ENCODE measurements at regions of chr20 and their contacts with region 1.

Region 1: DNA sequence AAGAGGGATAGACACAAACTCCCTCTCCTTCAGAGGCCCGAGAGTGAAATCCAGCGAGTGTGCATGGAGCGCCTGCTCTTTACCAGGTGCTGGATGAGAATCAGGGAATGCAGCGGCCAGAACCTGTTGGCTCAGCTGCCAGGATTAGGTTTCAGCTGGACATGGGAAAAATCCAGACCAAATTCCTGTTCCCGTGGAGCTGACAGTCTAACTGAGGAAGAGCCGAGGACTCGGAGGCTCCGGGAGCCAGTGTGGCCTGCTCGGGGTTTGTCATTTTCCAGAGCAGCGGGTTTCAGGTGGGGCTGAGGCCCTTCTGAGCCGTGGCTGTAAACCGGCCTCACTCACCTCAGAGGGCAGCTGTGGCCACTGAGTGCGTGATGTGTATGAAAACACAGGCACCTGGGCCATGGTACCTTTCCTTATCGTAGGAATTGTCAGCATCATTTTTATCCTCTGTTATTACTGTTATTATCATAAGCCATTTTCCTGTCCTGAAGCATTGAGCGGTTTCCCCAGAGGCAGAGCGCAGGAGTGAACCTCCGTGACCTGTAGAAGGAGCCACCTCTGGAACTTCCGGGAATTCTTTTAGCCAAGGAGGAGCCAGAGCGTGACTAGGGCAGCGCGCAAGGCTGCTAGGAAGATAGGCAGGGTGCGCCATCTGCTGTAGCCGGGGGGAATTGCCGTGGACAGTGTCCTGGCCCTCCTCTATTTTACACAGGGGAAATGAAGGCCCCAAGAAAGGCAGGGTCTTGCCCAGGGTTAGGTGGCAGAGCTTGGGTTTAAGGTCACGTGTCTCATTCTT is 27.3 kb downstream of the PKIG start:
- DNase-seq: peak; percentile 93
- ATAC-seq: peak; percentile 91

Region 2: DNA sequence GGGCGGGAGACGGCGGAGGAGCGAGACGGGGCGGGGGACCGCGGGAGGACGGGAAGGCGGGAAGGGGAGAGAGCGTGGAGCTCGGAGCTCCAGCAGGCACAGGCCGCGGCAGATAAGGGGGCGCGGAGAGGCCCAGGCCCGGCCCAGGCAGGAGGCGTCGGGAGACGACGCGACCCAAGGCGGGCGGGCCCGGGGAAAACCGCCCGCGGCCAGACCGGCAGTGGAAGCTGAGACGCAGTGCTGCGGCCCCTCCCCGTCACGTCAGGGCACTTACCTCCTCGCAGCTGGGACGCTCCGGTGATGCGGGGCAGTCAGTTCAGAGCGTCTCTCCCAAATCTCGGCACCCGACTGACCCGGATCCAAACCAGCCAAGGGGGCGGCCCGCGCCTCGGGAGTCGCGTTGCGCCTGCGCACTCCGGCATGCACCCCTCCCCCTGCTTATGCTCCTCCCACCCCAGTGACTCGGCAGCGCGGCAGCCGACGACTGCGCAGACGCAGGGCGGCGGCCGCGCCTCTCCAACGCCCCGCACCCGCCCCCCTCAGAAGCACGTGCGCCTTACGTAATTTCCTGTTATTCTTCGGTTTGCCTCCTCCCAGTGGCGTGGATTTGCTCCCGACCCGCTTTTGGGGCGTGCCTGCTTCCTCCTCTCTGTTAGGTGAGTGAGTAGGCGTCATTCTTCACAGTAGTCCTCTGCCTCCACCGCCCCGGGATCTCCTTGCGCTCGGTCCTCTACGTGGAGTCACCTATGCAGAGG is 399.1 kb before region 1 on chr20 and contains the start of gene OSER1:
- intact Hi-C with region 1: loop called (anchors 10 kb)
- DNase-seq: peak; percentile 97
- ATAC-seq: peak; percentile 96
- total RNA-seq, gene OSER1: 32.8 TPM

Region 3: DNA sequence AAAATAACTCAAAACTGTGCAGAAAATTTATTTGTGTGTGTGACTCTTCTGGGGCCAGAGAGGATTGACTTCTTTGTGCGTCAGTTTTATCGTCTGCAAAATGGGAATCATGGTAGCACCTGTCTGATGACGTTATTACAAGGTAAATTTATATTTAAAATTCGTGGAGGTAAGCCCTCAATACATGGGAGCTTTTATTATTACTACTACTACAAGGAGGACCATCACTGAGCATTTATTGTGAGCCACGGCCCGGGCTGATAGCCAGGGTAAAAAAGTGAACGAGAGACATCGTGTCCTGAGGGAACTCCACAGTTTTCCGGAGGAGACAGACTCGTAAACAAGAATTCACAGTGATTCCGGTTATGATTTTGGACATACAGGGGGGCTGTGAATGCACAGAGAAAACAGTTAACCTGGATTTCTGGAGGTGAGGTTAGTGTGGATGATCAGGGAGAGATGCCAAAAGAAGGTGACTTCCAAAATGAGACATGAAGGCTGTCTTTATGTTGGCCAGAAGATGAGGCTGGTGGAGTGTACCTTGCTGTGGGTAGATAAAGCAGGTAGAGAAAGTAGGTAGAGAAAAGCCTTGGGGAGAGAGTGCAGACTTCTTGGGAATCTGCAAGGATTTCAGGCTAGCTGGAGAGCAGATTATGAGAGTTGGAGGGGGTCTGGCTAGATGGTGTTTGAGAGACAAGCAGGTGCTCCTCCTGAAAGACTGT is 77.3 kb before region 1 on chr20:
- intact Hi-C with region 1: loop called (anchors 5 kb)
- DNase-seq: peak; percentile 55
- ATAC-seq: peak; percentile 54

Region 4: DNA sequence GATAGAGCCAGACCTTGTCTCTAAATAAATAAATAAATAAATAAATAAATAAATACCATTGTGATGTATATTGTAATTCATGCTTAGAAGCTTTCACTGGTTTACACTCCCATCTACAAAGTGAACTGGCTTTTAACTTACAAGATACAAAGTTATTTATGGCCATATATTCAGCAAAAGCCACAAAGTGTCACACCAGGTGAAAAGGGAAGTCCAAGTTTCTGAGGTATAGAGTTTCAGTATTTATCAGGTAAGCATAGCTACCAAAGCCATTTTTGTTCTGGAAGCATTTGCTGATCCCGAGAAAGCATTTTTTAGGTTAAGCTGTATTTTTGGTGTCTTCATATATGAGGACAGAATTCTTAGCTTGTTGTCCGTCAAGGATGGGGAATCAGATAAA is 49.5 kb before region 1 on chr20:
- intact Hi-C with region 1: no loop called
- DNase-seq: no peak
- ATAC-seq: no peak

Region 5: GRCh38 chr20:44576297-44576696 is 33.4 kb before region 1 on chr20:
- intact Hi-C with region 1: loop called (anchors 2 kb)
- DNase-seq: no peak
- ATAC-seq: no peak

Region 6: GRCh38 chr20:45910670-45911485 is 1301.2 kb after region 1 on chr20:
- intact Hi-C with region 1: no loop called
- DNase-seq: peak; percentile 97
- ATAC-seq: peak; percentile 90